ENCODE measurements at regions of chr17 and their contacts with region 1.

Region 1: DNA sequence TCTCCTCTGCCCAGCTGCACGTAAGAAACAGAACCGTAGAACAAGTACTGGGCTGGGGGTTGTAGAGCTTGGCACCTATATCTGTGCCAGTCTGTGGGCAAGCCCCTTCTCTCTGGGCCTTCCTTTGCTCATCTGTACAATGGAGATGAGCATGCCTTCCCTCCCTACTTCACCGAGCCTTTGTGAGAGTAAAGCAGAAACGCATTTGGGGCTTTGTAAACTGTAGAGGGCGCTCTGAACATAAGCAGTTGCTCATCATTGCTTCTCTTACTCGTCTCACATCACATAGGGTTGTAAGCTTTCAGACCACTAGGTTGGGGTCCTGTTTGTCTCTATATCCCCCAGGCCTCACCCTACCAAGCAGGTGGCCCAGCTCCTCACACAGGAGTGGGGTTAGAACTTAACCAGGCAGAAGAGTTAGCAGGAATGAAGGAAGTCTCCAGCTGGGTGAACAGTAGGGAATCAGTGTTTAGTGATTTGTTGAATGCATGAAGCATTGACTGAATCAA is 15.1 kb downstream of the SAMD14 start:
- DNase-seq: peak; percentile 68
- H3K4me3 ChIP-seq: no peak overlapping the region
- H3K27ac ChIP-seq: no peak overlapping the region
- H3K4me1 ChIP-seq: no peaks in the 10 kb centered on the region
- H3K27me3 ChIP-seq: no peaks in the 10 kb centered on the region
- CTCF ChIP-seq: peak; percentile 74 to 81
- POLR2A ChIP-seq: no peak

Region 2: GRCh38 chr17:50129728-50130558 is 15.0 kb after region 1 on chr17 and contains the start of gene SAMD14:
- CTCF ChIA-PET with region 1: interaction called, 37 read pairs
- POLR2A ChIA-PET with region 1: interaction called, 4 read pairs
- dilution Hi-C with region 1: no loop called
- intact Hi-C with region 1: no loop called
- DNase-seq: peak; percentile 53
- H3K4me3 ChIP-seq: peak within 1 kb of the TSS; percentile 22 to 53 (median 31)
- H3K27ac ChIP-seq: peak within 1 kb of the TSS; percentile 56
- H3K4me1 ChIP-seq: peaks cover 21% of the 10 kb centered on the region
- H3K27me3 ChIP-seq: no peaks in the 10 kb centered on the region
- CTCF ChIP-seq: no peak
- POLR2A ChIP-seq: no peak
- total RNA-seq, gene SAMD14: 15.6 and 16.1 TPM in 2 replicates

Region 3: DNA sequence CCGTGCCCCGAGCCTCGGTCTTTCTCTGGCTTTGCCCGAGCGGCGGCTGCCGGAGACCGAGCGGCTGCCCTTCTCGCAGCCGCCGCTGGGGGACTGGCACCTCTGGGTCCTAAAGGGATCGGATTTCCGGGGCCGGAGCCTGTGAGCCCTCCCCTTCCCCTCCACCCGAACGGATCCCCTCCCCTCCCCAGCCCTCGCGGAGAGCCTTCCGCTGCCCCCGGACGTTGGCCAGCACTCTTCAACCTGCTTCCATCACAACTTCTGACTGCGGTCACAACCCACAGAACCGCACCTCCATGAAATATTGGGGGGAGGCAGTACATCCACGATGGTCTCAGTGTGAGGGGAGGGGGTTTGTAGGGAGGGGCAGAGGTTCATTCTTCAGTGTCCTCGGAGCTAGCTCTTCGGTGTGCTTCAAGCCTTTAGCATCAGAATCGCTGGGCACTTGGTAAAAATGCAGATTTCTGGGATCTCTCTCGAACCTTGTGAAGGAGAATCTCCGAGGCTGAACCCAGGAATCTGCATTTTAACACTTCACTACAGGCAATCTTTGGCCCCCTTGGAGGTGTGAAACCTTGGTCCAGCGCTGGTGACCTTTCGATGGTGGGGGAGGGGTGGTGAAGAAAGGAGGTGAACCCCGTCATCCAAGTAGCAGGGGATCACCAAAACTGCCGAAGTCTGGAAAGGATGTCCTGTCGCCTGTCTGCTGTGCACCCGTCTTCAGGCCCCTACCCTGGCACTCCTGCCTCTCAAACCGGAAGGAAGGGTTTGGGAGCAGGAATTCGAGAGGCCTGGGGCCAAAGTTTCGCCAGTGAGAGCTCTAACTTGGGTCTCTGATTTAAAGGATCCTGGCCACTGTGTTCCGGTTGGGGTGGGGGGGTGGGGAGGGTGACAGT is 36.4 kb after region 1 on chr17:
- CTCF ChIA-PET with region 1: interaction called, 21 read pairs
- POLR2A ChIA-PET with region 1: interaction called, 3 read pairs
- dilution Hi-C with region 1: no loop called
- intact Hi-C with region 1: no loop called
- DNase-seq: peak; percentile 85
- H3K4me3 ChIP-seq: peak overlapping the region in 2 of 3 experiments; percentile 24 to 82
- H3K27ac ChIP-seq: peak overlapping the region; percentile 54
- H3K4me1 ChIP-seq: peaks cover 32% of the 10 kb centered on the region
- H3K27me3 ChIP-seq: no peaks in the 10 kb centered on the region
- CTCF ChIP-seq: peak; percentile 27 to 80
- POLR2A ChIP-seq: no peak

Region 4: DNA sequence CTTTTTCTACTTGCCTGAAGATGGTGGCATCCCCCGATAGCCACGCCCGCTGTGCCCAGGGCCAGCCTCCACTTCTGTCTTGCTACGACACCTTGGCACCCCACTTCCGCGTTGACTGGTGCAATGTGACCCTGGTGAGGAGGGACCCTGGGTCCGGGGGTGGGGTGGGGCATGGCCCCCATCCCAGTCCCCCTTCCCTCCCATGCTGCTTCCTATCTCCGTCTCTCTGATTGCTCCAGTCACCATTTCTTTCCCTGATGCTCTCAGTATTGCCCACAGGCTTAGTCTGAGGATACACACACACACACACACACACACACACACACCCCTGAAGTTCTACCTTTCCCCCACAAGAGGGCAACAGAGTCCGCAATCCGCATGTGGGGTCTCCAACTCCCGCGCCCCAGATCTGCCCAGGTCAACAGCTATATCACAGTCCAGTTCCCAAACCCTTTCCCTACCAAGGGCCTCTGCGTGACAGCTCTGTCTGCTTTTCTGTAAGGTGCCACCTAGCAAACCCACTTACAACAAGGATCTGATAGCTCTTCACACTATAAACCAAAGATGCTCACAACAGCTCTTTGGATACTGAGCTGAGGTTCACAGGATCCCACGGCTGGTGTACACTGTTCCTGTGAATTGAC is 54.3 kb after region 1 on chr17:
- CTCF ChIA-PET with region 1: interaction called, 12 read pairs
- POLR2A ChIA-PET with region 1: no interaction called
- dilution Hi-C with region 1: no loop called
- intact Hi-C with region 1: no loop called
- DNase-seq: peak; percentile 65
- H3K4me3 ChIP-seq: no peak overlapping the region
- H3K27ac ChIP-seq: no peak overlapping the region
- H3K4me1 ChIP-seq: peaks cover 5% of the 10 kb centered on the region
- H3K27me3 ChIP-seq: no peaks in the 10 kb centered on the region
- CTCF ChIP-seq: peak; percentile 78 to 88
- POLR2A ChIP-seq: no peak

Region 5: GRCh38 chr17:50269477-50270434 is 154.9 kb after region 1 on chr17:
- CTCF ChIA-PET with region 1: no interaction called
- POLR2A ChIA-PET with region 1: no interaction called
- dilution Hi-C with region 1: no loop called
- intact Hi-C with region 1: loop called (anchors 10 kb)
- DNase-seq: peak; percentile 51
- H3K4me3 ChIP-seq: no peak overlapping the region
- H3K27ac ChIP-seq: no peak overlapping the region
- H3K4me1 ChIP-seq: peaks cover 9% of the 10 kb centered on the region
- H3K27me3 ChIP-seq: peaks cover 3 to 6% of the 10 kb centered on the region in 2 experiments
- CTCF ChIP-seq: peak; percentile 83 to 84
- POLR2A ChIP-seq: no peak

Measured in endothelial cell of umbilical vein (primary cell).